Activated CD4-positive, alpha-beta T cell treated with anti-CD3 and anti-CD28 coated beads for 36 hours (primary cell): ENCODE measurements at regions of chrX and their contacts with region 1.

Region 1: DNA sequence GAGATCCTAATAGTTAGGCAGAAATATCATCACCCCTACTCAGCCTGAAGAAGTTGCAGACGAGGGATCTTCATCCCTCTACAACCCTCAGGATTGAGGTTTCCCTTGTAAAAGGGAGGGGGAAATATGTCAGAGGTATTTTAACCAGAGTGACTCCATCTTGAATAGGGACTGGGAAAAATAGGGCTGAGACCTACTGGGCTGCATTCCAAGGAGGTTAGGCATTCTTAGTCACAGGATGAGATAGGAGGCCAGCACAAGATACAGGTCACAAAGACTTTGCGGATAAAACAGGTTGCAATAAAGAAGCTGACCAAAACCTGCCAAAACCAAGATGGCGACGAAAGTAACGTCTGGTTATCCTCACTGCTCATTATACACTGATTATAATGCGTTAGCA is 17.5 kb downstream of the IL13RA2 start:
- DNase-seq: no peak
- ATAC-seq: no peak
- H3K4me3 Mint-ChIP-seq: no peak overlapping the region
- H3K27ac Mint-ChIP-seq: no peak overlapping the region
- H3K4me1 Mint-ChIP-seq: no peaks in the 10 kb centered on the region
- H3K27me3 Mint-ChIP-seq: no peaks in the 10 kb centered on the region

Region 2: GRCh38 chrX:114985967-114986592 is 13.8 kb before region 1 on chrX:
- CTCF ChIA-PET with region 1: no interaction called
- POLR2A ChIA-PET with region 1: no interaction called
- intact Hi-C with region 1: loop called in 1 of 2 experiments (anchors 1 kb)
- DNase-seq: no peak
- ATAC-seq: no peak
- H3K4me3 Mint-ChIP-seq: no peak overlapping the region
- H3K27ac Mint-ChIP-seq: no peak overlapping the region
- H3K4me1 Mint-ChIP-seq: no peaks in the 10 kb centered on the region
- H3K27me3 Mint-ChIP-seq: no peaks in the 10 kb centered on the region

Region 3: GRCh38 chrX:115177932-115178331 is 178.0 kb after region 1 on chrX:
- CTCF ChIA-PET with region 1: no interaction called
- POLR2A ChIA-PET with region 1: no interaction called
- intact Hi-C with region 1: no loop called
- DNase-seq: no peak
- ATAC-seq: no peak
- H3K4me3 Mint-ChIP-seq: no peak overlapping the region
- H3K27ac Mint-ChIP-seq: no peak overlapping the region
- H3K4me1 Mint-ChIP-seq: no peaks in the 10 kb centered on the region
- H3K27me3 Mint-ChIP-seq: no peaks in the 10 kb centered on the region